ENCODE measurements at regions of chr14 and their contacts with region 1.

Region 1: GRCh38 chr14:98138666-98139065 is 1133.3 kb downstream of the BCL11B start:
- DNase-seq: no peak
- ATAC-seq: no peak
- H3K4me3 ChIP-seq: no peak overlapping the region
- H3K27ac ChIP-seq: peak overlapping the region in 1 of 10 donors; percentile 41
- H3K4me1 ChIP-seq: no peaks in the 10 kb centered on the region
- H3K27me3 ChIP-seq: peaks cover 0 to 83% (median 40%) of the 10 kb centered on the region in 7 donors
- CTCF ChIP-seq: peak in 8 of 9 donors; percentile 5 to 59 (median 29)

Region 2: GRCh38 chr14:98182393-98183055 is 43.9 kb after region 1 on chr14:
- intact Hi-C with region 1: no loop called
- DNase-seq: no peak
- ATAC-seq: no peak
- H3K4me3 ChIP-seq: no peak overlapping the region
- H3K27ac ChIP-seq: peak overlapping the region in 1 of 10 donors; percentile 62
- H3K4me1 ChIP-seq: no peaks in the 10 kb centered on the region
- H3K27me3 ChIP-seq: peaks cover 0 to 11% (median 0%) of the 10 kb centered on the region in 7 donors
- CTCF ChIP-seq: no peak

Region 3: DNA sequence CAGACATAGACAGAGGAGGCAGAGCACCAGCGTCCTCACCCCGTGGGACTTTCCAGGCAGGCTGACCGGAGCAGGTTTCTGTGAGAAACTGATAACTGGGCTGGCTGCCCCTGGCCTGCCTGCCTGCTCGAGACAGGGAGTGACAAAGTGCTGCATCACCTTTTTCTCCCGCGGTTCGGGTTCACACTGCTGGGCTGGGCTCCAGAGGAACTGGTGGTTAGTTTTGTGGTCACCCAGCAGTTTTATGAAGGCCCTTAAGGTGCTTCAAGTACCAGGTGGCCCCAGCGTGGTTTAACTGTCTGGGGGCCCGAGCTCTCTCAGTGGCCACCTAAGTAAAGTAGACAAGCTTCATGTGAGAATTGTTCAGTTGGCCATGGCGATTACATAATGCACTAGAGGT is 59.7 kb after region 1 on chr14:
- intact Hi-C with region 1: no loop called
- DNase-seq: no peak
- ATAC-seq: no peak
- H3K4me3 ChIP-seq: no peak overlapping the region
- H3K27ac ChIP-seq: peak overlapping the region in 1 of 10 donors; percentile 38
- H3K4me1 ChIP-seq: no peaks in the 10 kb centered on the region
- H3K27me3 ChIP-seq: peaks cover 0 to 26% (median 11%) of the 10 kb centered on the region in 7 donors
- CTCF ChIP-seq: no peak

Region 4: GRCh38 chr14:99266181-99267178 is 1127.8 kb after region 1 on chr14:
- intact Hi-C with region 1: loop called in 1 of 10 experiments (anchors 10 kb)
- DNase-seq: peak; percentile 54 to 76
- ATAC-seq: peak in 7 of 8 donors; percentile 62 to 88 (median 80)
- H3K4me3 ChIP-seq: peak overlapping the region in 1 of 10 donors; percentile 13
- H3K27ac ChIP-seq: peak overlapping the region in 1 of 10 donors; percentile 81
- H3K4me1 ChIP-seq: peaks cover 0 to 22% (median 17%) of the 10 kb centered on the region in 9 donors
- H3K27me3 ChIP-seq: peaks cover 23 to 100% (median 97%) of the 10 kb centered on the region in 7 donors
- CTCF ChIP-seq: peak; percentile 95 to 99 (median 98)

Measured in heart right ventricle (tissue), 16 donors.